ENCODE measurements at regions of chr18 and their contacts with region 1.

Region 1: DNA sequence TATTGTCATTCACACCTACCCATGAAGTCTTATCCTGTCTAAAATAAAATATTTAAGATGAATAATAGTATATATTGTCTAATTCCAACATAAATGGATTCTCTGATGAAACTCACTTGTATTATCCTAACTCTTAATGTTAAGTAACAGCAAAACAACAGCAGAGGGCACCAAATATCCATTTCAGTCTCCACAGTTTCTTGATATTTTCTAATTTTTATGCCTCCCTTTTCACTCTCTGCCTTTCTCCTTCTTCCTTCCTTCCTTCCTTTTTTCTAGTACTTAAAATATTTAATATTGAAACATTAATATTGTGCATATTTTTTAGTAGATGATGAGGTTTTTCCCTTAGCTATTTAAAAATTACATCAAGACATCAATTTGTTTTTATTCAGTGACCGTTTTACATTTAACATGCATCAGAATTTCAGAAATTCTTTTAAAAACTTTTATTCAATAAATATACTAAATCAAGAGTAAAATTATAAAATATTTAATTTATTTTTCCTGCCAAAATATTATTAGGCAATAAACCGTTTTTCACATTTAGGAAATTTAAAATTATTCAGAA is 97.6 kb downstream of the WDR7 start:
- DNase-seq: no peak
- ATAC-seq: no peak
- H3K4me3 ChIP-seq: no peak overlapping the region
- H3K27ac ChIP-seq: no peak overlapping the region
- H3K4me1 ChIP-seq: peaks cover 0 to 10% of the 10 kb centered on the region in 2 donors
- H3K27me3 ChIP-seq: no peaks in the 10 kb centered on the region
- CTCF ChIP-seq: peak in 4 of 5 experiments; percentile 19 to 57 (median 46)
- POLR2A ChIP-seq: no peak

Region 2: DNA sequence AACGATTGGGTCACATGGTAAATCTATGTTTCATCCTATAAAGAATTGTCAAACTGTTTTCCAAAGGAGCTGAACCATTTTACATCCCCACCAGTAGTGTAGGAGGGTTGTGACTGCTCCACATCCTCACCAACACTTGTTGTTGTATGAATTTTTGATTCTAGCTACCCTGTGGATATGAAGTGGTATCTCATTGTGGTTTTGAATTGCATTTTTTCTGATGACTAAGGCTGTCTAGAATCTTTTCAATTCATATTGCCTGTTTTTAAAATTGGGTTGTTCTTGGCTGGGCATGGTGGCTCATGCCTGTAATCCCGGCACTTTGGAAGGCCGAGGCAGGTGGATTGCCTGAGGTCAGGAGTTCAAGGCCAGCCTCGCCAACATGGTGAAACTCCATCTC is 154.9 kb before region 1 on chr18:
- in situ Hi-C with region 1: no loop called
- intact Hi-C with region 1: no loop called
- DNase-seq: no peak
- ATAC-seq: no peak
- H3K4me3 ChIP-seq: no peak overlapping the region
- H3K27ac ChIP-seq: no peak overlapping the region
- H3K4me1 ChIP-seq: no peaks in the 10 kb centered on the region
- H3K27me3 ChIP-seq: no peaks in the 10 kb centered on the region
- CTCF ChIP-seq: no peak
- POLR2A ChIP-seq: no peak

Region 3: DNA sequence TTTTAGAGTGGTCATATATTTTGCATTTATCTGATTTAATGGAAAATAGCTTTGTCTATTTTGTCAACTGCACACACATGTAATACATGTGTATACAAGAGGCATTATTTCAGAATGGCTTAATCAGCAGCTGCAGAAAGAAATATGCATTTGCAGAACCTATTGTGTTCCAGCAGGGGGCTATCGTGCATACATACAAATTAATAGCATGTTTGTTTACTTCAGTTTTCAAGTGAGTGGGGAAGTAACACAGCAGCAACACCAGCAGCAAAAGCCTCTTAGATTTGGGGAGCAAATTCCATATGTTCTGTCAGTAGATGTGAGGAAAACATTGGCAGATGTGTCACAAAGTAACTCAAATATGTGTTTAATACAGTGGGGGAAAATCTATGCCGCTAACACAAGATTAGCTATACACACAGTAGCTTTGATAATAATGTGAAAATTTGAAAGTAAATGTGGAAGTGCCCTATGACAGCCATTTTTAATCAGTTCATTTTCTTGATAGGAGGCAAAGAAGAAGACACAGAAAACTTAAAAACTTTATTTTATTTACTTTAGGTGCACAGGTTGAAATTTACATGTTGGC is 120.5 kb after region 1 on chr18:
- in situ Hi-C with region 1: no loop called
- intact Hi-C with region 1: no loop called
- DNase-seq: no peak
- ATAC-seq: peak; percentile 46 to 56
- H3K4me3 ChIP-seq: no peak overlapping the region
- H3K27ac ChIP-seq: no peak overlapping the region
- H3K4me1 ChIP-seq: no peaks in the 10 kb centered on the region
- H3K27me3 ChIP-seq: no peaks in the 10 kb centered on the region
- CTCF ChIP-seq: peak; percentile 28 to 69 (median 51)
- POLR2A ChIP-seq: no peak

Region 4: DNA sequence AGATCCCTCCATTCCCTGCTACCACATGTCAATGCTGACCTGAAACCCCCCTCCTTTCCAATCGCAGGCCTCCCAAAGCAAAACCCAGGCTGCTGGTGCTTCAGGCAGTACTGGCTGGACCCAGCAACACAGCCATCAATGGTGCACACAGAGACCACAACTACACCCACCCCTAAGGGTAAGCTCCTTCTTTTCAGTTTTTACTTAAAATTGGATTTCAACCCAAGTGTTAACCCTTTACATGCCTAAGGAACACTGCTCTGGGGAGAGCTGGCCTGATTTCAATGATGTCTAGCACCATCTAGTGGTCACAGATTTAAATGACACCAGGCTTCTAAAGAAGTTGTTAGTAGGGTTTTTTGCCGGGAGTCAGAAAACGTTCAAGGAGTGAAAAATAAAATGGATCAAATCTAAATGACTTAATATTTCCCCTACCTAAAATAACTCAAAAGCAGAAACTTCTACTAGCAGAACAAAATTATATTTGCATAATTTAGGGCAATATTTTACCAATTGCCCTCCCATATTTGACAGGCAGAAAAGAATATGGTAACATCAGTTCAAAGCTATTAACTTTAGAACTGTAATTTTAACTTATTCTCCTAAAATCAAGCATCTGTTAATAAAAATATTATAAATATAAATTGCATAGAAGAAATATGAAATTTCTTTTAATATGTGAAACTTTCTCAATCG is 813.1 kb after region 1 on chr18:
- in situ Hi-C with region 1: loop called (anchors 25 kb)
- intact Hi-C with region 1: loop called (anchors 5 kb)
- DNase-seq: no peak
- ATAC-seq: peak in 1 of 2 donors; percentile 49
- H3K4me3 ChIP-seq: no peak overlapping the region
- H3K27ac ChIP-seq: no peak overlapping the region
- H3K4me1 ChIP-seq: no peaks in the 10 kb centered on the region
- H3K27me3 ChIP-seq: no peaks in the 10 kb centered on the region
- CTCF ChIP-seq: peak; percentile 56 to 85 (median 70)
- POLR2A ChIP-seq: no peak